ENCODE measurements at regions of chr10 and their contacts with region 1.

Region 1: DNA sequence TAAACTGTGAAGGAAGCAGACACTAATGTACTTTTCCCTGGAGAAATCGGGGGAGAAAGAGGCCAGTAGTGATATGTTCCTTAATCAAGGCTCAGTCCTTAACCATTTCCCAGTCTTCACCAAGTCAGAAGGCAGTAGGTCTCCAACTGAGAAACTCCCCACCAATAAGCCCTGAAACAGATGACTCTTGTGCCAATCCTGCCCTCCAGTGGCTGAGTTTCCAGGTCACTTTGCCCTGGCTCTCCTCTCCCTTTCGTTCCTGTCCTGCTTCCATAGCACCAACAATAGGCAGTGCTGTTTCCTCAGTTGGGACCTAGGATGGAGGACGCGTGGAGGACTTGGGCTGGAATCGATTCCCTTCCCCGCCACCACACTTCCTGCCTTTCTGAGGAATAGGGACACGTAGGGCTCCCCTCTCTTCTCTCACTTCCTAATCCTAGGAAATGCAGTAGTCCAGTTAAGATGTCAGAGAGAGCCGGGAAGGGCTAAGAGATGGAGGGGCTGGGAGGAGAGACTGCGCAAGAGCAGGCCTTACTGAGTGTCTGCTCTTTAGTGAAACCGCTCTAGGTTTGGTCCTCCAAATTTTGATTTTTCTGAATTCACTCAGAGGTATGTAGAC is 23.4 kb downstream of the ATOH7 start:
- DNase-seq: peak; percentile 85
- H3K4me3 ChIP-seq: no peak overlapping the region
- H3K27ac ChIP-seq: no peak overlapping the region
- H3K4me1 ChIP-seq: peaks cover 7% of the 10 kb centered on the region
- H3K27me3 ChIP-seq: no peaks in the 10 kb centered on the region
- CTCF ChIP-seq: peak; percentile 77

Region 2: GRCh38 chr10:68010426-68010940 is 198.1 kb before region 1 on chr10:
- CTCF ChIA-PET with region 1: no interaction called
- POLR2A ChIA-PET with region 1: interaction called, 15 read pairs
- intact Hi-C with region 1: no loop called
- DNase-seq: no peak
- H3K4me3 ChIP-seq: no peak overlapping the region
- H3K27ac ChIP-seq: no peak overlapping the region
- H3K4me1 ChIP-seq: no peaks in the 10 kb centered on the region
- H3K27me3 ChIP-seq: no peaks in the 10 kb centered on the region
- CTCF ChIP-seq: no peak

Region 3: GRCh38 chr10:68223535-68224165 is 15.1 kb after region 1 on chr10:
- CTCF ChIA-PET with region 1: interaction called, 3 read pairs
- POLR2A ChIA-PET with region 1: interaction called, 15 read pairs
- intact Hi-C with region 1: no loop called
- DNase-seq: no peak
- H3K4me3 ChIP-seq: no peak overlapping the region
- H3K27ac ChIP-seq: no peak overlapping the region
- H3K4me1 ChIP-seq: no peaks in the 10 kb centered on the region
- H3K27me3 ChIP-seq: peaks cover 6% of the 10 kb centered on the region
- CTCF ChIP-seq: no peak; the same call in 1 of the 2 replicates

Region 4: DNA sequence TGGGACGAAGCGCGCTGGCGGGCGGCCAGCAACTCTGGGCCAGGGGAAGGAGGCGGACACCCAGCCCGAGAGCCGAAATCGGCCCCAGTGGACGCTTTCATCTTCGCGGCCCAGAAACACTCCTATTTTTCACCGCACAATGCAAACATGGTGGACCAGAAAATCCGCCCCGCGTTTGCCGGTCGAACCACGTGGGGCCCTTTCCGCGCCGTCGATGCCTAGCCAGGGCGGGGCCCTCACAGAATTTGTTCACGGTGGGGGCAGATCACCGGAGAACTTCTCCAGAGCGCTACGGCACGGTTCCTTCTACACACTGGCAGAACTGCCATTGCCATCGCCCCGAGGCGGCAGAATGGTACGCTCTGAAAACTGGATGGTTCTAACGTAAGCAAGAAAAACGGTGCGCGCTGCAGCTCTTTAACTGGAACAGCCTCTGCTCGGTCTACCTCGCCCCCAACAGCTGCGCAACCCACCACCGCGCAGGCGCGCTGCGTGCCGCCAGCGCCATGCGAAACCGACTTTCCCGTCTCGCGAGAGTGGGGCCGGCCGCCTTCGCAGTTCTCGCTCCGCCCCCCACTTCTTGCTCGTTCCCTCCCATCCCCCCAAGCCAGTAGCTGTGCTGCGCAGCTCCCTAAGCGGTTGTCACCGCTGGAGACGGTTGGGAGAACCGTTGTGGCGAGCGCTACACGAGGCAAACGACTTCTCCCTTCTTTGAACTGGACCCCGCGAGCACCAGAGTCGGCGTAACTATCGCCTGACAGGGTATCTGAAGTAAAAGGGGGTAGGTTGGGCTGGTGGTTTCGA is 123.1 kb after region 1 on chr10 and contains the start of gene HNRNPH3:
- CTCF ChIA-PET with region 1: interaction called, 13 read pairs
- POLR2A ChIA-PET with region 1: no interaction called
- intact Hi-C with region 1: no loop called
- DNase-seq: peak; percentile 99
- H3K4me3 ChIP-seq: peak within 1 kb of the TSS; percentile 94
- H3K27ac ChIP-seq: peak within 1 kb of the TSS; percentile 99
- H3K4me1 ChIP-seq: peaks cover 50% of the 10 kb centered on the region
- H3K27me3 ChIP-seq: no peaks in the 10 kb centered on the region
- CTCF ChIP-seq: no peak
- total RNA-seq, gene HNRNPH3: 237 and 251 TPM in 2 replicates

Region 5: GRCh38 chr10:68901104-68901927 is 692.8 kb after region 1 on chr10 and contains the start of gene DDX50:
- CTCF ChIA-PET with region 1: no interaction called
- POLR2A ChIA-PET with region 1: no interaction called
- intact Hi-C with region 1: loop called (anchors 10 kb)
- DNase-seq: peak; percentile 100
- H3K4me3 ChIP-seq: peak within 1 kb of the TSS; percentile 85
- H3K27ac ChIP-seq: peak within 1 kb of the TSS; percentile 98
- H3K4me1 ChIP-seq: peaks cover 17% of the 10 kb centered on the region
- H3K27me3 ChIP-seq: no peaks in the 10 kb centered on the region
- CTCF ChIP-seq: no peak
- total RNA-seq, gene DDX50: 46.1 and 50.1 TPM in 2 replicates

Region 6: DNA sequence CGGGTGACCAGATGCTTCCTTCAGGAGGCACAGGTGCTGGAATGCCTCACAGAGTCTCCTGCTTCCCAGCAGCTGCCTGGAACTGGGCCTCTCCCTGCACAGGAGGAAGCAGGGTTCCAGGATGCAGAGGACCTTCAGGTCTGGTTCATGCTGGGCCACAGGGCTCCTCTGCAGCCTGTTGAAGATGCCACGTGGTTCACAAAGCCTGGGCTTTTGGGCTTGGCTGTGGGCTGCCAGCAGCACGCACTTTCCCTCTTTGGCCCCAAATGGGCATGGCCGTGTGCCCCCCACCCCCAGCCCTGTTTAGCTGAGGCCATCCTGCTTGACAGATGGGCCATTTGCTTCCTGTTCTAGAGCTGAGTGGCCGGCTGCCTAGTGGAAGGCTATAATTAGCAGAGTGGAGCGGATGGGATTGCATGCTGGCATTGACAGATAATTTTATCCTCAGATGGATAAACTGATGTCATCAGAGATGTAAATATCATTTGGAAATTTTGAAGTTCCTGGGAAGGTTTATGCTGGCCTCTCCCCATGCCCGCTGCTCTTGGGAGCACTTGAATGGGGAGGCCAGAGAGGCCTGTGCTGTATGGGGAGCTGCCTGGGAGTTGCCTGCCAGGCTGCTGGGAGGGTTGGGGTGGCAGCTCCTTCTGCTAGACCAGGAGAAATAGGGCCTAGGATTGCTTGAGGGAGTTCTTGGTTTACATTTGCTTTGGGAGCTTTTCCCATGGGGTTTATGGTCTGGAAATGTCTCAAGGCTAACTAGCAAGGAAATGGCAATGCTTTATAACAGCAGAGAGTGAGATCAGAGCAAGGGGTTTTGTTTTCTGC is 1270.9 kb after region 1 on chr10:
- CTCF ChIA-PET with region 1: no interaction called
- POLR2A ChIA-PET with region 1: no interaction called
- intact Hi-C with region 1: no loop called
- DNase-seq: no peak
- H3K4me3 ChIP-seq: no peak overlapping the region
- H3K27ac ChIP-seq: no peak overlapping the region
- H3K4me1 ChIP-seq: no peaks in the 10 kb centered on the region
- H3K27me3 ChIP-seq: no peaks in the 10 kb centered on the region
- CTCF ChIP-seq: no peak

Measured in A673 (cell line).